Activated T-helper 2 cell treated with anti-CD3 and anti-CD28 coated beads, Interferon-gamma antibody, Interleukin-2, Interleukin-4, amounts not matched to agents 10 μg/mL and 5 μg/mL and 100 μg/mL, durations not matched to agents 14 hours and 24 hours and 36 hours (primary cell): ENCODE measurements at regions of chr17 and their contacts with region 1.

Region 1: GRCh38 chr17:43694077-43694870 is 32.6 kb upstream of the MEOX1 start:
- DNase-seq: peak; percentile 65
- H3K4me3 Mint-ChIP-seq: no peak overlapping the region
- H3K27ac Mint-ChIP-seq: no peak overlapping the region
- H3K4me1 Mint-ChIP-seq: no peaks in the 10 kb centered on the region
- H3K27me3 Mint-ChIP-seq: peaks cover 9% of the 10 kb centered on the region

Region 2: DNA sequence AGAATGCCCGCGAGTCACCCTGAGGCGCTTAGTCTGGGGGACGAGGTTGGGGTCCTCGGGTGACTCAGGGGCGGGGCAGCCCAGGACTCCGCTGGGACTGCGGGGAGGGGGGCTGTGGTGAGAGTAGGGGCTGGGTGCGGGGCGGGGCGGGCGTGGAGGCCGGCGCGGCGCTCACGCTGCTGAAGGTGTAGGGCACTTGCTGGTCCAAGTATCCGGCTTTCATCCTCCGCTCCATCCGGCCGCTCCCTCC is 149.0 kb before region 1 on chr17:
- intact Hi-C with region 1: no loop called
- DNase-seq: peak; percentile 24
- H3K4me3 Mint-ChIP-seq: peak overlapping the region; percentile 90
- H3K27ac Mint-ChIP-seq: no peak overlapping the region
- H3K4me1 Mint-ChIP-seq: peaks cover 19% of the 10 kb centered on the region
- H3K27me3 Mint-ChIP-seq: peaks cover 43% of the 10 kb centered on the region

Region 3: GRCh38 chr17:43645765-43646481 is 48.4 kb before region 1 on chr17:
- intact Hi-C with region 1: no loop called
- DNase-seq: no peak
- H3K4me3 Mint-ChIP-seq: peak overlapping the region; percentile 44
- H3K27ac Mint-ChIP-seq: no peak overlapping the region
- H3K4me1 Mint-ChIP-seq: peaks cover 4% of the 10 kb centered on the region
- H3K27me3 Mint-ChIP-seq: peaks cover 15% of the 10 kb centered on the region

Region 4: DNA sequence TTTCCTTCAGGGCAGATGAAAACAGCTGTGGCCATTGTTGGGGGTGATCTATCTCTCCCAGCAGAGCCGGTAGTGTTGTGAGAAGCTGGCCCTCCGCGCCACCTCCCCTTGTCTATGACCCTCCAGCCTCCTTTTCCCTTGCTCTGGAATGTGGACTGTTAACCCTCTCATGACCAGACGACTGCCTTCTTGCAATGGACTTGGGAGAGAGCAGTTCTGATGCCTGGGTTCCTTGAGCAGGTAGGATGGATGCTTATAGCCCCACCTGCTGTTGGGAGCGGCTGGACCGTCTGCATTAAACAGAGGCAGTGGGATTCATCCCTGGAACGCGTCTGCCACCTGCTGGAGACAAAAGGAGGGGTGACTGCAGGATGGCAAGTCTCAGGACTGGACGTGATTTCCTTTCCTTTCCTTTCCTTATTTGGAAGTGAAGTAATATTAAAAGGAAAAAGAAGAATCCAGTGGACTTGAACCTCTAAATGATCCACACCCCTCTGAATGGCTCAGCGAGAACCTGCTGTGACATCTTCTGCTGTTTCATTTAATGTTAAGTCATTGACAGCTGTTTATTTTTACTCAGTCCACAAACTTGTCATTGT is 66.1 kb after region 1 on chr17:
- intact Hi-C with region 1: loop called (anchors 1 kb)
- DNase-seq: peak; percentile 78
- H3K4me3 Mint-ChIP-seq: no peak overlapping the region
- H3K27ac Mint-ChIP-seq: no peak overlapping the region
- H3K4me1 Mint-ChIP-seq: no peaks in the 10 kb centered on the region
- H3K27me3 Mint-ChIP-seq: peaks cover 18% of the 10 kb centered on the region